Aorta (tissue), 5 donors: ENCODE measurements at regions of chr11 and their contacts with region 1.

Region 1: DNA sequence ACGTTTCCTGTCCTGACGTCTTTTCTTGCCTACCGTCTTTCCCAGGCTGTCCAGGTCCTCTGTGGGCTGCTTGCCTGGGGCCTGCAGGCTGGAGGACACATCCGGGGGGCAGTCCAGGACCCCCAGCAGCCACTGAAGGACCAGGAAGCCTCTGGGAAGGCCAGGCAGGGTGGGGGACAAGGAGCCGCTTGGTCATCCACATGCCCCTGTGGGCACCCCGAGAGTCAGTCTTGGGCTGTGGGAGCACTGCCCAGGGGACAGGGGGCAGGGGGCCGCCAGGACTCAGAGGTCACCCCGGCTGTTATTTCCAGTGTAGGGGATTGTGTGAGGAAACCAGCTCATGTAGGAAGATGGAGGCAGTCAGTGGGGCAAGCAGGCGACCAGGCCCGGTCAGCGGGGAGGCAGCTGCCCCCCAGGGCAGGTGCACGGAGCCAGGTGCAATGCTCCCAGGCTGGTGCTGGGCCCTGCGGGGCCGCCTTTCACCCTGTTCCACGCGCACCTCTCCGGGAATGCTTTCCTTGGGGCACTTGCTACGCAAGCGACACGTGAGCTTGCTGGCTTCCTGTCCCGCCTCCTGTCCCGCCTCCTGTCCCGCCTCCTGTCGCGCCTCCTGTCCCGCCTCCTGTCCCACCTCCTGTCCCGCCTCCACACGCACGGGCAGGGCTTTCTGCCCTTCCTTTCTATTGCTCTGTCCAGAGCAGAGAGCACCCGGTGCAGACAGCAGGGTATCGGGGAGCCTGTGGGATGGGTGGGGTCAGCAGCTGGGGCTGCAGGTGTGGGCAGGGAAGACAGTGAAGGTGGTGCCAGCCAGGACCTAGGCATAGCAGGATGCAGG is 39.5 kb downstream of the MUC5B start:
- DNase-seq: peak; percentile 94 to 97
- ATAC-seq: peak; percentile 93
- H3K4me3 ChIP-seq: no peak overlapping the region
- H3K27ac ChIP-seq: no peak overlapping the region
- H3K4me1 ChIP-seq: no peaks in the 10 kb centered on the region
- H3K27me3 ChIP-seq: no peaks in the 10 kb centered on the region

Region 2: DNA sequence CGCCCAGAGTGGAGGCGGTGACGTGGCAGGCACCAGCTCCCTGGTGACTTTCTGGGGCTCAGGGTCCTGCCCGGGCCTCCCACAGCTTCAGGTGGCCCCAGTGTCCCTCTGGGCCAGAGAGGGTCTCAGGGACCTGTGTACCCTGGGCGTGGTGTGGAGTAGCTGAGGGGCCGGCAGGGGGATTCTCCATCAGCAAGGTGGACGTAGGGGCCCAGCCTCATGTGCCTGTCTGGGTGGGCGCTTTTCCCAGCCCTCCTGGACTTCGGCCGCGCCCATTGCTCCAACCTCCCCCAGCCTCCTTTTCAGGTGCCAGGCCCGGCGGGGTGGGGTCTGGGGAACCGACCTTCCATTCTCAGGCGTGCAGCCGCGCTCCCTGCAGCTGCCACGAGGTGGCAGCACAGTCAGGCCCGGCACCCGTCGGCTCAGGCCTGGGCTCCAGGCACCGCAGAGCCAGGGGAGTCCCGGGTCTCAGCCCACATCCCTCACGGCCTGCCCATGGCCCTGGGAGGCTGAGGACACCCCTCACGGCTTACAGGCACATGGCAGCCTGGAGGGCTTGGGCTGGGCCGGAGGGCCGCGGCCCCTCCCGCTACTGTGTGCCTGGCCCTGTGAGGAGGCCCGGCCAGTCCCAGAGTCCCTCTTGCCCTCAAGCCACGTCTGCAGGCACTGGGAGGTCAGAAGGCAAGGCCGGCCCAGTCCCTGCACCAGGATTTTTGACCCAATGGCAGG is 59.4 kb before region 1 on chr11:
- intact Hi-C with region 1: no loop called
- DNase-seq: peak; percentile 55 to 88
- ATAC-seq: peak; percentile 73
- H3K4me3 ChIP-seq: no peak overlapping the region
- H3K27ac ChIP-seq: no peak overlapping the region
- H3K4me1 ChIP-seq: no peaks in the 10 kb centered on the region
- H3K27me3 ChIP-seq: no peaks in the 10 kb centered on the region

Region 3: GRCh38 chr11:1298695-1299492 is 36.5 kb after region 1 on chr11:
- intact Hi-C with region 1: loop called in 1 of 2 experiments (anchors 5 kb)
- DNase-seq: peak; percentile 85 to 92
- ATAC-seq: peak; percentile 80
- H3K4me3 ChIP-seq: no peak overlapping the region
- H3K27ac ChIP-seq: no peak overlapping the region
- H3K4me1 ChIP-seq: no peaks in the 10 kb centered on the region
- H3K27me3 ChIP-seq: no peaks in the 10 kb centered on the region

Region 4: DNA sequence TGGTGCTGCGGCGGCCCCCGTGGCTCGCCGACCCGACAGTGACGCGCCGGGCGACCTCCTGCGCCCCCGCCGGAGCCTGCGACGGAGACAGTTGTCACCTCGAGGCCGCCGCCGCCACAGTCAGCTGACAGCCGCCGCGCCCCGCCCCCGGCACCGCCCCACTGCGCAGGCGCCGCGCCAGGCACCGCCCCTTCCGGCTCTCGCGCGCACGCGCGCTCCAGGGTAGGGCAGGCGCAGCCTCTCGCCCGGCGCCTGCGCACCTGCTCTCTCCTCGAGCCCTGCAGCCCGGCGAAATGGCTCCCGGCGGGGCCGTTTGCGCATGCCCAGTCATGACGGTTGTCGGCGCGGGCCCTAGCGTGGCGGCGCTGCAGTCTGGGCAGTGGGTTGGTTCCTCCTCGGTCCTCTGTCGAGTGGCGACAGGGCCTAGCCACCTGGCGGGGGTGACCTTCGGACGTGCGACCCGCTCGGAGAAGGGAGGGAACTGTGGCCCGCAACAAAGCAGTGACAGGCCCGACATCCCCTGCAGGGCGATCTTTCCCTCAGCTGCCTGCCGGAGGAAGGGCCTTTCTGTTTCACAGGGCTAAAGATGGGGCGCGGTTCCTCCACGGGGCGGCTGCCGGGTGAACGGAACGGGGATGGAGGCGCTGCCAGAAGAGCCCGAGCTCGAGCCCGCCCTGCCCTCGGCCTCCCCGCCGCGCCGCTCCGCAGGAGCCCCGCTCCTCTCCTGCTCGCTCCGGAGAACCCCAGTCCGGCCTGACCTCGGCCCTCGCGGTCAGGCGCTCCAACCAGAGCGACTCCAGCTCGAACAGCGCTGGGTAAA is 47.3 kb after region 1 on chr11 and contains the start of gene TOLLIP:
- intact Hi-C with region 1: loop called in 1 of 2 experiments (anchors 5 kb)
- DNase-seq: peak; percentile 97 to 99
- ATAC-seq: peak; percentile 97
- H3K4me3 ChIP-seq: peak within 1 kb of the TSS; percentile 75 to 93
- H3K27ac ChIP-seq: peak within 1 kb of the TSS; percentile 4 to 71
- H3K4me1 ChIP-seq: no peaks in the 10 kb centered on the region
- H3K27me3 ChIP-seq: no peaks in the 10 kb centered on the region
- total RNA-seq, gene TOLLIP: 49.1 to 52.1 TPM

Region 5: DNA sequence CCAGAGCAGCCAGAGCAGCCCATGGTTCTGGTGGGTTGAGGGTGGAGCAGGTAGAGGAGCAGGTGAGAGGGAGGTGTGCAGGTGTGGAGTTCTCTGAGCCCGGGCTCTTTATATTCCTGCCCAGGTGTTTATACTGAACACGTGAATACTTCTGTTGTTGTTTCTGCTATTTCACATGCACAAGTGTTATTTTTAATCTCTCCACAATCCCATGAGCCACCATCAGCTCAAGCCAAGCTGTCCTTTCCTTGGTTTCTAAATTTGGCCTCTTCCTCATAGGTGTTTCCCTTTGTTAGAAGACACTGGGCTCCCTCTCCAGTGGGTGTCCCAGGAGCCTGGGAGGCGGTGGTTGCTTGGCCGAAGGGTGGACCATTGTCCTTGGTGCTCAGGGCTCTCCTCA is 346.0 kb after region 1 on chr11 and contains the start of gene KRTAP5-3:
- intact Hi-C with region 1: no loop called
- DNase-seq: no peak
- ATAC-seq: no peak
- H3K4me3 ChIP-seq: no peak within 1 kb of the TSS
- H3K27ac ChIP-seq: no peak within 1 kb of the TSS
- H3K4me1 ChIP-seq: no peaks in the 10 kb centered on the region
- H3K27me3 ChIP-seq: no peaks in the 10 kb centered on the region
- total RNA-seq, gene KRTAP5-3: not detected